Activated CD4-positive, alpha-beta memory T cell treated with anti-CD3 and anti-CD28 coated beads for 36 hours (primary cell): ENCODE measurements at regions of chr19 and their contacts with region 1.

Region 1: GRCh38 chr19:41541990-41542584 is 33.9 kb upstream of the CEACAM21 start:
- DNase-seq: peak; percentile 88
- H3K4me3 Mint-ChIP-seq: peak overlapping the region; percentile 57
- H3K27ac Mint-ChIP-seq: peak overlapping the region; percentile 96
- H3K4me1 Mint-ChIP-seq: peaks cover 60% of the 10 kb centered on the region
- H3K27me3 Mint-ChIP-seq: no peaks in the 10 kb centered on the region

Region 2: DNA sequence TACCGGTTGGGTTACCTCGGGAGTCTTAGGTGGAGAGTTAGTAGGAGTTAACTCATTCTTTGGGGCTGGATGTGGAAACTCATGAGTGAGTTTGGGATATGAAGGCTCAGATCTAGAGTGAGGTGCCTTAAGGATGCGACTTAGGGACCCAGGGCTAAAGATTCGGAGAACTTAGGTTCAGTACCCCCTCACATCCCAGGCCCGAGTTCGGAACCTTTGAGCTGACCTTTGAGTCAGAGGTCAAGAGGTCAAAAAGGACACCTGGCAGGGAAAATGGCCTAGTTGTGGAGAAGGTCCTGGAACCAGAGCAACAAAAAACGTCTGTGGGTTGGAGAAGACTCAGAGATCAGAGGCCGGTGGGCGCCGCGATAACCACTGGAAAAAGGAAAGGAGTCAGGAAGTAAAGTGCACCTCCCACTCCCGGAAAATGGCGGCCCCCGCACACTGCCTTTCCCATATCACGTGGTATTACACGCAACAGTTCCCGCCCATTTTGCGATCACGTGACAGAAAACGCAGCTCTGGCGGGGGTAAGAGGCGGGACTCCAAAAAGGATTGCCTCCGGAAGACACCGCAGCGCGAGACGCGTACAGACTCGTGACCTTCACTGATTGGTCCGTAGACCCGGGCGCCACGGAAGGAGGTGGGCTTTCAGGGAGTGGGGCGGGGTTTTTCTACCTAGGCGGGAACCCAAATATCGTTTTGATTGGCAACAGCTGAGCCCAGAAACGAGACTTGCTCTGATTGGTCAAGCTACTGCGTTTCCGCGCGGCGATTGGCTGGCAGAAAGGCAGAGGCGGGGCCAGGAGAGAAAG is 791.8 kb before region 1 on chr19 and contains the start of gene ACTMAP:
- CTCF ChIA-PET with region 1: no interaction called
- POLR2A ChIA-PET with region 1: no interaction called
- intact Hi-C with region 1: loop called (anchors 10 kb)
- DNase-seq: peak; percentile 100
- H3K4me3 Mint-ChIP-seq: peak within 1 kb of the TSS; percentile 94
- H3K27ac Mint-ChIP-seq: peak within 1 kb of the TSS; percentile 97
- H3K4me1 Mint-ChIP-seq: peaks cover 32% of the 10 kb centered on the region
- H3K27me3 Mint-ChIP-seq: no peaks in the 10 kb centered on the region
- total RNA-seq, gene ACTMAP: 14.1 to 15.8 TPM

Region 3: GRCh38 chr19:41449079-41449864 is 92.8 kb before region 1 on chr19:
- CTCF ChIA-PET with region 1: interaction called, 104 read pairs
- POLR2A ChIA-PET with region 1: no interaction called
- intact Hi-C with region 1: loop called (anchors 1 kb)
- DNase-seq: peak; percentile 84
- H3K4me3 Mint-ChIP-seq: peak overlapping the region; percentile 62
- H3K27ac Mint-ChIP-seq: no peak overlapping the region
- H3K4me1 Mint-ChIP-seq: peaks cover 7% of the 10 kb centered on the region
- H3K27me3 Mint-ChIP-seq: peaks cover 9% of the 10 kb centered on the region

Region 4: DNA sequence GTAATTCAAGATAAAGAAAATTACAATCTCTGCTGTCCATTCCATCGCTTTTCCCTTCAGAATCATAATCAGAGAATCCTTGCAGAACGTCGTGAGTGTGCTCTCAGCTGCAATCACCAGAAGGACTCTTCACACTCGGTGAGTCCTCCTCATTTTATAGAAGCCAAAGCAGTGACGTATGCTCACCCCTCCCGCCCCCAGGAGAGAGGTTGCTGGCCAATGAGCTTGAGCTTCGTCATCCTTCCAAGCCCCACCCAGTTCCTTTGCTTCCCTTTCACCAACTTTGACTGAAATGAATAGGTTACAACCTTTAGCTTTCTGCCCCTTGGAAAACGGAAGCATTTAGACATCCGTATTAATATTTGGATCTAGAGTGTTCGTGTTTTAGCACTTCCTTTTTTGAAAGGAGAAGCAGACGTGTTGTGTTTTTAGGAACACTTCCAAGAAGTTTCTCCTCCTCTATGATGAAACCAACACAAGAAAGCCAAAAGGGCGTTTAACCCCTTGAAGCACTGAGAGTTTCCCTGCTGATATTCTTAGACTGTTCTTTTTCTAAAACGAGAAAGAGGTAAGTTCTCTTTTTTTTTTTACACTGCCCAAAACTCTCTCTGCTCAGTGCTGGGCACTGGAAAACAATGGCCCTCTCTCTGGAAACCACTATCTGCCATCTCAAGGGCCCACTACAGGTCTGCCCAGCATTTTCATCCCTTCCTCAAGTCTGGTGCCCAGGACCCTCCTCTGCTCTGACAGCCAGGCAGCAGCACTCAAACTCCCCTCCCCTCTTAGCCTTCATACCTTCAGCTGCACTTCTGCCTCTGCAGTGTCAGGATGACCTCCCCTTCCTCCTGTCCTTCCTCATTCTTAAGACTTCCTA is 10.4 kb before region 1 on chr19:
- CTCF ChIA-PET with region 1: interaction called, 20 read pairs
- POLR2A ChIA-PET with region 1: interaction called, 21 read pairs
- intact Hi-C with region 1: loop called (anchors 1 kb)
- DNase-seq: peak; percentile 92
- H3K4me3 Mint-ChIP-seq: peak overlapping the region; percentile 74
- H3K27ac Mint-ChIP-seq: peak overlapping the region; percentile 69
- H3K4me1 Mint-ChIP-seq: peaks cover 72% of the 10 kb centered on the region
- H3K27me3 Mint-ChIP-seq: peaks cover 4% of the 10 kb centered on the region

Region 5: GRCh38 chr19:41563854-41564514 is 21.9 kb after region 1 on chr19:
- CTCF ChIA-PET with region 1: interaction called, 205 read pairs
- POLR2A ChIA-PET with region 1: interaction called, 10 read pairs
- intact Hi-C with region 1: loop called (anchors 1 kb)
- DNase-seq: peak; percentile 74
- H3K4me3 Mint-ChIP-seq: peak overlapping the region; percentile 62
- H3K27ac Mint-ChIP-seq: peak overlapping the region; percentile 38
- H3K4me1 Mint-ChIP-seq: peaks cover 72% of the 10 kb centered on the region
- H3K27me3 Mint-ChIP-seq: no peaks in the 10 kb centered on the region

Region 6: DNA sequence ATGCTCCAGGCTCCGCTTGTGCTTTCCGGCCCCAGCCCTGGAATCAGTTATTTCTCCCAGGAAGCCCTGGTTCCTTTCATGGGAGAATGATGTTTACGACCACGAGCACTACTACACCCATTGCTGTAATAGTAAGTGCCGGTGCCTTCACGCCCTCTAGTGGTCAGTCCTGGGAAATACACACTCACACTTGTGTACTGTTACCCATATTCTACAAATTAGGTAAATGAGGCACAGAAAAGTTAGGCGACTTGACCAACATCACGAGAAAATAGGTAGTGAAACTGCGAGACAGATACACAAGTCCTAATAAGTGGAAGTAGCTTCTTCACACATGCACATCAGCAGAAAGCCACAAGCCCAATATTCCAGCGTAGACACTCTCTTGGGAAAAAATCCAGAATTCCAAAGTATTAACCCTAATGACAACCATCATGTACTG is 55.5 kb after region 1 on chr19:
- CTCF ChIA-PET with region 1: interaction called, 4 read pairs
- POLR2A ChIA-PET with region 1: no interaction called
- intact Hi-C with region 1: loop called (anchors 1 kb)
- DNase-seq: peak; percentile 80
- H3K4me3 Mint-ChIP-seq: peak overlapping the region; percentile 42
- H3K27ac Mint-ChIP-seq: no peak overlapping the region
- H3K4me1 Mint-ChIP-seq: peaks cover 12% of the 10 kb centered on the region
- H3K27me3 Mint-ChIP-seq: peaks cover 16% of the 10 kb centered on the region